HEK293T (cell line): ENCODE measurements at regions of chr1 and their contacts with region 1.

Region 1: GRCh38 chr1:18945401-18945849 is 11.1 kb downstream of the IFFO2 start:
- DNase-seq: peak; percentile 31

Region 2: GRCh38 chr1:18956369-18957135 is 11.1 kb after region 1 on chr1 and contains the start of gene IFFO2:
- CTCF ChIA-PET with region 1: no interaction called
- POLR2A ChIA-PET with region 1: interaction called, 15 read pairs
- DNase-seq: peak; percentile 100

Region 3: DNA sequence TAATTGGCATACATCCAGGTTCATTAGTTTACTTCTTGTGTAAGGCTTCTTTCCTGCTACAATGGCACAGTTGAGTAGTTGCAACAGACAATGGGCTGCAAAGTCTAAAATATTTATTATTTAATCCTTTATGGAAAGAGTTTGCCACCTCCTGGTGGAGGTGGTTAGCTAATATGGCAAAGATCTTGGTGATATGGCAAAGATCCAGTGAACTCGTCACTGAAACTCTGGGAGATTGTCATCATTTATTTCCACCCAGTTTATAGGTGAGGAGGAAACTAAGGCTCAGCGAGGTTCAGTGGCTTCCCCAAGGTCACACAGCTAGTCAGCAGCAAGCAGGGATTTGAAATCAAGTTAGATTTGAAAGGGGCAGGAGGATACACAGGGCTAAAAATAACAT is 27.1 kb after region 1 on chr1:
- CTCF ChIA-PET with region 1: no interaction called
- POLR2A ChIA-PET with region 1: no interaction called
- DNase-seq: no peak

Region 4: GRCh38 chr1:19128968-19129514 is 183.6 kb after region 1 on chr1:
- CTCF ChIA-PET with region 1: no interaction called
- POLR2A ChIA-PET with region 1: no interaction called
- DNase-seq: no peak